Activated T-helper 2 cell treated with anti-CD3 and anti-CD28 coated beads, Interferon-gamma antibody, Interleukin-2, Interleukin-4, amounts not matched to agents 10 μg/mL and 5 μg/mL and 100 μg/mL, durations not matched to agents 14 hours and 24 hours and 36 hours (primary cell): ENCODE measurements at regions of chr14 and their contacts with region 1.

Region 1: DNA sequence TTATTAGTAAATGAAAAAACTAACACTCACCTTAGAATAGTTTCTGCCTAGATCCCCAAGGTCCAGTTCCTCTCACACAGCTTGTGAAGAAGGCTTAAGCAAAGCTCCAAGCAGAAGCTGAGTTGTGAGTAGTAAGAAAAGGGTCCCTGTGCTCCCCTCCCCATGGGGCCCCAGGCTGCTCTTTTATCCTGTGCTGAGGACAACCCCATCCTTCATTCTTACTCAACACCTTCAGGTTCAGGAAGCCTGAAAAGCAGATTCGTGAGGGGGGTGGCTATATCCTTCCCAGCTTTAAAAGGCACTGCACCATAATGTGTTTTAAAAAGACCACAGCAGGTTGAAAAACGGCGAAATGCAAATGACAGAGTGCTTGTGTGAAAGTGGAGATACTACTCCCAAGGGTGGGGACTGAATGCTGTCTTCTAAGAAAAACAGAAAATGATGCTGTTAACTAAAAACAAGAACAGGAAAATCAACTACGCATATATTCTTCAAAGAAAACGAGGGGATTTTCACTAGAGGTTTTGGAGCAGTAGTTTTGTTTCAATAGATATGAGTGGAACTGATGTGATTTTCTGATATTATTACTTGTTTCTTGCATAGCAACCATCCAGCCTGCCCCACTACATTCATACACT is 182.7 kb downstream of the KTN1 start:
- DNase-seq: no peak
- H3K4me3 Mint-ChIP-seq: no peak overlapping the region
- H3K27ac Mint-ChIP-seq: peak overlapping the region; percentile 2
- H3K4me1 Mint-ChIP-seq: peaks cover 5% of the 10 kb centered on the region
- H3K27me3 Mint-ChIP-seq: peaks cover 3% of the 10 kb centered on the region

Region 2: DNA sequence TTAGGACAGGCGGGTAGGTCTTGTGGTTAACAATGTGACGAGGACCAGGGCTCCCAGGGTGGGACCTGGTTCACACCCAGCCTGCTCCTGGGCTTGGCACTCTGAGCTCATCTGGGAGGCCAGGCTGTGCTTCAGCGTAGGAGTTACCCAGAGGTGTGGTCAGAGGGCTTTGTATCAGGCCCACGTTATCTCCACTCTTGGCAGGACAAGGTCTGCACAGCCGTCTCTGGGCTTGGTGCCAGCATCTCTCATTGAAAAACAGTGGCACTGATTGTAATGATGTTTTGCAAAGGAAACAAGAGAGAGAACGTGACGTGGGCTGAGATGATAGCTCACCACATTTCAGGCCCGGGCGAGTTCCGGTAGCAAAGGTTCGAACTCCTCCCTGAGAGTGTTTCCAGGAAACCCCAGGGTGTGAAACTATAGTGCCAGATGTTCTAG is 44.4 kb after region 1 on chr14:
- intact Hi-C with region 1: loop called (anchors 2 kb)
- DNase-seq: peak; percentile 52
- H3K4me3 Mint-ChIP-seq: no peak overlapping the region
- H3K27ac Mint-ChIP-seq: peak overlapping the region; percentile 42
- H3K4me1 Mint-ChIP-seq: peaks cover 28% of the 10 kb centered on the region
- H3K27me3 Mint-ChIP-seq: peaks cover under 1% of the 10 kb centered on the region